ENCODE measurements at regions of chr14 and their contacts with region 1.

Region 1: DNA sequence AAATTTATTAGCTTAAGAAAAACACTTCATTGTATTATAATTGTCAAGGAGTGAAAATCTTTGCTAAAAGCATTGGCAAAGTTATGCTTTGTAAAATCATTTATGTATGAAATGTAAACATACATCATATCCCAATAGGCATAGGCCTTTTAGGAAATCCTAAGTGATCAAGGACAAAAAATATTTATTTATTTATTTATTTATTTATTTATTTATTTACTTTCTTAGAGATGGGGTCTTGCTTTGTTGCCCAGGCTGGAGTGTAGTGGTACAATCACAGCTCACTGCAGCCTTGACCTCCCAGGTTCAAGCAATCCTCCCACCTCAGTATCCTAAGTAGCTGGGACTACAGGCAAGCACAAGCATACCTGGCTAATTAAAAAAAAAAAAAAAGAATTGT is 32.0 kb upstream of the DLGAP5 start:
- DNase-seq: no peak
- H3K4me3 ChIP-seq: no peak overlapping the region
- H3K27me3 ChIP-seq: no peaks in the 10 kb centered on the region
- CTCF ChIP-seq: no peak

Region 2: DNA sequence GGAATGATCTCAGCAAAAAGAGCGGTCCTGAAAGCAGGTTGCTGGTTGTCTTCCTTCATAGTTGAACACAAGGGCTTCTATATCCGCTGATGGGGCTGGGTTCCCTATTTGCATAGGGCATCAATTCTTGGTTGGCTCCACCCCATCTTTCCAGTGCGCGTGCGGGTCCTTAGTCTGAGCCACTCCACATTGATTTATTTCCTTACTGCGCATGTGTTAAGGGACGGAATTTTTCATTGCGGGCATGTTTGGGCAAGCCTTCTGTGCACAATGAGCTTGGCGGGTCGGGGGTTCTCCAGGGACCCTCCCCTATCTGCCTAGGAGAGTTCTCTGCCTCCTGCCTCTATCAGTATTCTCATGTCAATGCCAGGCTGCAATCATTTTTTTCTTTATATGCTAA is 10.7 kb before region 1 on chr14:
- CTCF ChIA-PET with region 1: interaction called, 12 read pairs
- POLR2A ChIA-PET with region 1: no interaction called
- DNase-seq: no peak
- H3K4me3 ChIP-seq: no peak overlapping the region
- H3K27me3 ChIP-seq: no peaks in the 10 kb centered on the region
- CTCF ChIP-seq: no peak

Measured in BJ (cell line).